ENCODE measurements at regions of chr2 and their contacts with region 1.

Region 1: DNA sequence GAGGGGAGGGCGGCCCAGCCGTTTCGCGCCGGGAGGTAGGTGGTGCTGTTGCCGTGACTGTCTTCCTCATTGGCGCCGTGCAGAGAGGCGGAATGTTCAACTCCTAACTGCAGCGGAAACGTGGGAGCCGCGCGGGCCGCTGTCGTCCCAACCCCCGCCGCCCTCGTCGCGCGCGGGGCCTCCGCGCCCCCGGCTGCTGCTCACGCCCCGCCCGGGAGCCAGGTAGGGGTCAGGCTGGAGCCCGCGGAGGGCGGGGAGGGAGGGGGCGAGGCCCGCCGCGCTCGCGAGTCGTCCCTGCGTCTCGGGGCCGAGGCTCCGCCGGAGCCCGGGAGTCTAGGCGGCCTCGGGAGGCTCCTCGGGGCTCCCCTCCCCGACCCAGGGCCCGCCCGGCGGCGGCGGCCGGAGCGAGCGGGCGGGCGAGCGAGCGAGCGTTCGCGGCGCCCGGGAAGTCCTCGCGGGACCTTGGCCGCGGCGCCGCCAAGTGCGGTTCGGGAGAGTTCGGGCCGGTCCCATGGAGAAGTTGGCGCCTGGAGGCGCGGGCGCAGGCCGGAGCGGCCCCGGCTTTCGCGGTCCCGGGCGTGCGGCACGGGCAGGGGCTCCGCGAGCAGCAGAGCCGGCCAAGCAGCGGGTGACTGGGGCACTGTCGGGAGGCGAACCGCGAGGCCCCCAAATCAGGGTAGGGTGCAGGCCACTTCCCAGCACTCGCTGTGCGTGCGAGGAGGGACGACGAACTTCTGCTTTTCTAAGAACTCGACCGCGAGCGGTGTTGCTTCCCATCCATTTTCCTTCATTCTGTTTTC is at the start of gene MAP3K20:
- DNase-seq: no peak
- H3K4me3 ChIP-seq: peak within 1 kb of the TSS; percentile 74
- CTCF ChIP-seq: peak; percentile 80

Region 2: GRCh38 chr2:173048897-173049661 is 26.9 kb before region 1 on chr2:
- CTCF ChIA-PET with region 1: interaction called, 24 read pairs
- POLR2A ChIA-PET with region 1: interaction called, 4 read pairs
- DNase-seq: peak; percentile 90
- H3K4me3 ChIP-seq: no peak overlapping the region; the same call in 1 of the 2 replicates
- CTCF ChIP-seq: no peak

Region 3: GRCh38 chr2:173064151-173064805 is 11.7 kb before region 1 on chr2:
- CTCF ChIA-PET with region 1: interaction called, 13 read pairs
- POLR2A ChIA-PET with region 1: no interaction called
- DNase-seq: no peak
- H3K4me3 ChIP-seq: no peak overlapping the region
- CTCF ChIP-seq: no peak

Region 4: DNA sequence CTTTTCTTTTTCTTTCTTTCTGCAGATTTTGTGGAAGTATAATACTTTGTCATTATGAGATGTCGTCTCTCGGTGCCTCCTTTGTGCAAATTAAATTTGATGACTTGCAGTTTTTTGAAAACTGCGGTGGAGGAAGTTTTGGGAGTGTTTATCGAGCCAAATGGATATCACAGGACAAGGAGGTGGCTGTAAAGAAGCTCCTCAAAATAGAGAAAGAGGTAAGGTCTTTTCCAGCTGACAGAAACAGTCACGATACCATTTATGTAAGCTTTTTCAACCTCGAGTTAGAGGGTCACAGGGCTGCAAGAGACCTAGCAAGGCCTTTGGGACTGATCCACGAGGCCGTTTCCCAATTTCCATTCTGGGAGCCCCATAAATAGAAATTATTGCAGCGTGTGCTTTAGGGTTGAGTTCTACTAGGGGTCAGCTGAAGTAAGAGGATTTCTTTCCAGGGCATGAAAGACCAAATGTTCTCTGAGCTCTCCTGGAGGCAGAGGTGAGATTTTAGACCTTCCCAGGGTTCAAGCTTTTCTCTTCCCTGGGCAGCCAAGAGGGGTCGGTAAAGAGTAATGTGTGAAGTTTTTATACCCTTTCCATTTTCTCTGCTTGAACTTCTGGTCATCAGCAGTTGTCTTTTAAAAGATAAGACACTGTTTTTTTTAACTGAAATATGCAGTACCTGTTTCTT is 15.1 kb after region 1 on chr2:
- CTCF ChIA-PET with region 1: interaction called, 12 read pairs
- POLR2A ChIA-PET with region 1: interaction called, 3 read pairs
- DNase-seq: no peak
- H3K4me3 ChIP-seq: no peak overlapping the region
- CTCF ChIP-seq: no peak

Region 5: GRCh38 chr2:173101687-173102086 is 25.7 kb after region 1 on chr2:
- CTCF ChIA-PET with region 1: no interaction called
- POLR2A ChIA-PET with region 1: no interaction called
- DNase-seq: no peak
- H3K4me3 ChIP-seq: no peak overlapping the region
- CTCF ChIP-seq: no peak